Activated naive CD8-positive, alpha-beta T cell treated with anti-CD3 and anti-CD28 coated beads, Interleukin-2, amount 10 ng/mL, durations not matched to agents 7 days and 5 days (primary cell): ENCODE measurements at regions of chr10 and their contacts with region 1.

Region 1: GRCh38 chr10:72260588-72261322 is 13.0 kb upstream of the DDIT4 start:
- DNase-seq: peak; percentile 95
- ATAC-seq: peak; percentile 80
- H3K4me3 Mint-ChIP-seq: peak overlapping the region; percentile 80
- H3K27ac Mint-ChIP-seq: peak overlapping the region; percentile 91
- H3K4me1 Mint-ChIP-seq: peaks cover 55% of the 10 kb centered on the region
- H3K27me3 Mint-ChIP-seq: no peaks in the 10 kb centered on the region

Region 2: GRCh38 chr10:72292223-72292691 is 31.5 kb after region 1 on chr10:
- POLR2A ChIA-PET with region 1: interaction called, 26 read pairs
- DNase-seq: peak; percentile 49
- ATAC-seq: peak; percentile 11
- H3K4me3 Mint-ChIP-seq: peak overlapping the region; percentile 66
- H3K27ac Mint-ChIP-seq: peak overlapping the region; percentile 93
- H3K4me1 Mint-ChIP-seq: peaks cover 55% of the 10 kb centered on the region
- H3K27me3 Mint-ChIP-seq: no peaks in the 10 kb centered on the region

Region 3: GRCh38 chr10:72297968-72298773 is 37.4 kb after region 1 on chr10:
- POLR2A ChIA-PET with region 1: interaction called, 26 read pairs
- DNase-seq: peak; percentile 89
- ATAC-seq: peak; percentile 76
- H3K4me3 Mint-ChIP-seq: peak overlapping the region; percentile 80
- H3K27ac Mint-ChIP-seq: peak overlapping the region; percentile 95
- H3K4me1 Mint-ChIP-seq: peaks cover 52% of the 10 kb centered on the region
- H3K27me3 Mint-ChIP-seq: no peaks in the 10 kb centered on the region

Region 4: GRCh38 chr10:72319416-72320254 is 58.9 kb after region 1 on chr10:
- POLR2A ChIA-PET with region 1: interaction called, 43 read pairs
- DNase-seq: peak; percentile 94
- ATAC-seq: peak; percentile 72
- H3K4me3 Mint-ChIP-seq: peak overlapping the region; percentile 84
- H3K27ac Mint-ChIP-seq: peak overlapping the region; percentile 99
- H3K4me1 Mint-ChIP-seq: peaks cover 69% of the 10 kb centered on the region
- H3K27me3 Mint-ChIP-seq: no peaks in the 10 kb centered on the region

Region 5: GRCh38 chr10:72331601-72332422 is 71.1 kb after region 1 on chr10:
- POLR2A ChIA-PET with region 1: interaction called, 48 read pairs
- DNase-seq: peak; percentile 89
- ATAC-seq: peak; percentile 61
- H3K4me3 Mint-ChIP-seq: peak overlapping the region; percentile 91
- H3K27ac Mint-ChIP-seq: peak overlapping the region; percentile 100
- H3K4me1 Mint-ChIP-seq: peaks cover 73% of the 10 kb centered on the region
- H3K27me3 Mint-ChIP-seq: no peaks in the 10 kb centered on the region